ENCODE measurements at regions of chr22 and their contacts with region 1.

Region 1: GRCh38 chr22:19970479-19971275 is 29.1 kb upstream of the TXNRD2 start:
- DNase-seq: peak; percentile 85
- ATAC-seq: peak; percentile 71

Region 2: DNA sequence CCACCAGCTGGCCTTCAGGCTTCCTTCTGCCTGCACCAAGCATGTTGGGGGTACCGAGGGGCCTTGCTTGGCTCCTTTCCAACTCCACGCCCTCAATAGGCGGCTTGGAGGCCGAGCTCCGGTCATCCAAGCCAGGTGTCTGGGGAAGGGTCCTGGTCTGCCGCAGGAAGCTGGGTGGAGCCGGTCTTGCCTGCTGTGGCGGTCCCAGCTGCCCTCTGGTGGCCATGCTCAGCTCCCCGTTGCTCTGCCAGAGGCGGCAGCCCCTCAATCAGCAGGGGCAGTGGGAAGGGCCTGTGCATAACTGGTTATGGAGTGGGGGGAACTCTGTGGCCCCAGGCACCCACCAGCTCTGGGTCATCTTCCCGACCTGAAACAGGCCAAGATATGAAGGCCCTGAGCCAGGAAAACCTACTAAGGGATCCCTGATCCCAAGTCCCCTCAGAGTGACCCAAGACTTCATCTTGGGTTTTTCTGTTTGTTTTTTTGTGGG is 42.8 kb after region 1 on chr22:
- intact Hi-C with region 1: loop called (anchors 5 kb)
- DNase-seq: peak; percentile 87
- ATAC-seq: peak; percentile 53

Region 3: GRCh38 chr22:20027966-20028854 is 57.5 kb after region 1 on chr22:
- intact Hi-C with region 1: no loop called
- DNase-seq: no peak
- ATAC-seq: no peak

Region 4: DNA sequence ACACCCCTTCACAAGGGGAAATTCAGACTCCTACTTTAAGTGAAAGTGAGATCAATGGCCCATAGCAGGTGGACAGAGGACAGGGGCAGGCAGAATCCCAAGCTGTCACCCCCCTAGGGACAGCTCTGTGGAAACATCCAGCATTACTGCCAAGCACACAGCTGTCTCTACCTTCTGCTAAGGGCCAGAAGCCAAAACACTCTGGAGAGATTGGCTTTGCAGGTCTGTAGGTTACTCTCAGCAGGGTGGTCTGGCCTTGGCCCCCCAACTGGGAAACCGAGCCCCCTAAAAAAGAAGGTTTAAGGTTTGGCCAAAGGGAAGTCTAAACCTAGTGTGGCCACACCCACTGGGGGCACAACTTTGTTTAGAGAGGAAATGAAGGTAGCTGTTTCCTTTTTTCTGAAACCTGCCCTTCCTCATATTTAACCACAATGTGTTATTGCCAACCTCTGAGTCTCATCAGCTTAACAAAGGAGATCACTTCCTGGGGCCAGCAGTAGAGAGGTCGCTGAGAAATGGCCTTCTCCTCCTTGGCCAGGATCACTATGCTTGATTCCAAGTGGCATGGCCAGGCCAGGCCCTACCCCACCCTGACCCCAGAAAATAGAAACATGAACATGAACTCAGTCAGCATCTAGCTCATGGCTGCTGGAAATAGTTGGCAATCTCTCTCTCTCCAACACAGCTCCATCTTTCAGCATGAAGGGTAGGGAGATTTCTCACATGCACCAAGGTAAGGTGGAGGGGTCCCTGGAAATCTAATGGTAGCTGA is 492.8 kb after region 1 on chr22:
- intact Hi-C with region 1: no loop called
- DNase-seq: no peak
- ATAC-seq: peak; percentile 37